Body of pancreas (tissue), 4 donors: ENCODE measurements at regions of chr21 and their contacts with region 1.

Region 1: GRCh38 chr21:32257962-32258785 is 20.7 kb downstream of the MIS18A start:
- DNase-seq: peak; percentile 84 to 87 (median 86)
- ATAC-seq: peak; percentile 88
- H3K4me3 ChIP-seq: no peak overlapping the region
- H3K27ac ChIP-seq: peak overlapping the region in 1 of 4 donors; percentile 45
- H3K4me1 ChIP-seq: peaks cover 25% of the 10 kb centered on the region
- H3K27me3 ChIP-seq: no peaks in the 10 kb centered on the region
- CTCF ChIP-seq: peak; percentile 36 to 95 (median 91)
- POLR2A ChIP-seq: no peak

Region 2: GRCh38 chr21:31786164-31786920 is 471.8 kb before region 1 on chr21:
- intact Hi-C with region 1: loop called (anchors 2 kb)
- DNase-seq: no peak
- ATAC-seq: no peak
- H3K4me3 ChIP-seq: no peak overlapping the region
- H3K27ac ChIP-seq: no peak overlapping the region
- H3K4me1 ChIP-seq: no peaks in the 10 kb centered on the region
- H3K27me3 ChIP-seq: no peaks in the 10 kb centered on the region
- CTCF ChIP-seq: peak in 1 of 7 experiments; percentile 5
- POLR2A ChIP-seq: no peak

Region 3: DNA sequence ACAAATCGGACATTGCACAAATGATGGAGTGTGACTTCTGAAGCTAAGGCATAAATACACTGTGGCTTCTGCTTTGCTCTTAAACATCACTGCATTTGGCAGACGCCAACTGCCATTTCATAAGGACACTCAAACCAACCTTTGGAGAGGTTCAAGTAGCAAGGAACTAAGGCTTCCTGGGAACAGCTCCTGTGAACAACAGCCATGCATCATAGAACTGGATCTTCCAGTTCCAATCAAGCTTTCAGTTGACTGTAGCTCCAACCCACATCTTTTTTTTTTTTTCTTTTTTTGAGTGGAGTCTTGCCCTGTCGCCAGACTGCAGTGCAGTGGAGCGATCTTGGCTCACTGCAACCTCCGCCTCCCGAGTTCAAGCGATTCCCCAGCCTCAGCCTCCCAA is 396.1 kb before region 1 on chr21:
- intact Hi-C with region 1: loop called (anchors 5 kb)
- DNase-seq: no peak
- ATAC-seq: no peak
- H3K4me3 ChIP-seq: no peak overlapping the region
- H3K27ac ChIP-seq: no peak overlapping the region
- H3K4me1 ChIP-seq: peaks cover 9% of the 10 kb centered on the region
- H3K27me3 ChIP-seq: no peaks in the 10 kb centered on the region
- CTCF ChIP-seq: no peak
- POLR2A ChIP-seq: no peak

Region 4: GRCh38 chr21:32457360-32457840 is 199.2 kb after region 1 on chr21:
- intact Hi-C with region 1: no loop called
- DNase-seq: peak; percentile 65 to 77 (median 72)
- ATAC-seq: peak; percentile 58
- H3K4me3 ChIP-seq: no peak overlapping the region
- H3K27ac ChIP-seq: peak overlapping the region; percentile 60 to 74 (median 68)
- H3K4me1 ChIP-seq: peaks cover 21% of the 10 kb centered on the region
- H3K27me3 ChIP-seq: no peaks in the 10 kb centered on the region
- CTCF ChIP-seq: peak in 4 of 7 experiments; percentile 22 to 32 (median 30)
- POLR2A ChIP-seq: no peak